Adrenal gland (tissue), 19 donors: ENCODE measurements at regions of chr17 and their contacts with region 1.

Region 1: GRCh38 chr17:50397111-50397918 is at the start of gene LRRC59:
- DNase-seq: peak; percentile 86 to 93 (median 89)
- H3K4me3 ChIP-seq: peak within 1 kb of the TSS; percentile 46 to 90 (median 69)
- H3K27ac ChIP-seq: peak within 1 kb of the TSS; percentile 77 to 97 (median 94)
- H3K4me1 ChIP-seq: peaks cover 20 to 33% of the 10 kb centered on the region in 2 donors
- H3K27me3 ChIP-seq: no peaks in the 10 kb centered on the region
- CTCF ChIP-seq: peak; percentile 87 to 98 (median 93)
- POLR2A ChIP-seq: peak; percentile 75 to 79
- total RNA-seq, gene LRRC59: 88.6 to 337 (median 109) TPM

Region 2: DNA sequence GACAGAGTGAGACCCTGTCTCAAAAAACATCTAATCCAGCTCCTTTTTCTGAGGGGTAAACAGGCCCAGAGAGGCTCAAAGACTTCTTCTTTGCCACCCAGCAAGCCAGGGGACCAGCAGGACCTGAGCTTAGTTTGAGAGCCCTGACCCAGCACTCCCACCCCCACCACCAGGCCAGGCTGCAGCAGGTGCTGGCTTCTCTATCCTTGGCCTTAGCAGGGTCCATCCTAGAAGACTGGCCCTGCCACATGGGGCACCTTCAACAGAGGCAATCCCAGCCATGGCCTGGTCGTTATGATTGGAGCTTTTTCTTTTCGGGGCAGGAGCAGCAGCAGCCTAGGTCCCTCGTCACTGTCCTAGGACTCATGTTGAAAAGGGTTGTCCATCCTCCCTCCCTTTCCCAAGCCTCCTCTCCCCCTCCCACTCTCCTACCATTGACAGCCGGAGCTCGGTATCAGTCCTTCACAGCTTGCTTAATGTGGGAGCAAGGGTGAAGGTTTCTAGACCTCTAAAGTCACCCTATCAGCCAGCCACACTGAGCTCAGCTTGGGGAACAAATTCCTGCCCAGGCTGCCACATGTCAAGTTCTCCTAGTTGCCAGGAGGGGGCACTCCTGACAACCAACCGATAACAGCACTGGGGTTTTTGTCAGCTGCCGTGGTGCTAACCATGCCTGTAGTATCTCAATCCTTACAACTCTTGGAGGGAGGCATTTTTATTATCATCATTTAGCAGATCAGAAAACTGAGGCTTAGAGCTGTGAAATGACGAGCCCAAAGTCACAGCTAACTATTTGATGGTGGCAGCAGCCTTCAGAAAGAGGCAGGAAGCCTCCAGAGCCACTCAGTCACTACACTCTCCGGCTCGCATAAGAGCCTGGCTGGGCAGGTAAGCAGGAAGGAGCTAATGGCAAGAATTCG is 35.5 kb before region 1 on chr17:
- intact Hi-C with region 1: loop called in 1 of 2 experiments (anchors 5 kb)
- DNase-seq: peak; percentile 56 to 85 (median 76)
- H3K4me3 ChIP-seq: no peak overlapping the region
- H3K27ac ChIP-seq: no peak overlapping the region
- H3K4me1 ChIP-seq: peaks cover 7 to 16% of the 10 kb centered on the region in 2 donors
- H3K27me3 ChIP-seq: no peaks in the 10 kb centered on the region
- CTCF ChIP-seq: peak; percentile 66 to 77 (median 74)
- POLR2A ChIP-seq: no peak